GM12878 (cell line): ENCODE measurements at regions of chr17 and their contacts with region 1.

Region 1: DNA sequence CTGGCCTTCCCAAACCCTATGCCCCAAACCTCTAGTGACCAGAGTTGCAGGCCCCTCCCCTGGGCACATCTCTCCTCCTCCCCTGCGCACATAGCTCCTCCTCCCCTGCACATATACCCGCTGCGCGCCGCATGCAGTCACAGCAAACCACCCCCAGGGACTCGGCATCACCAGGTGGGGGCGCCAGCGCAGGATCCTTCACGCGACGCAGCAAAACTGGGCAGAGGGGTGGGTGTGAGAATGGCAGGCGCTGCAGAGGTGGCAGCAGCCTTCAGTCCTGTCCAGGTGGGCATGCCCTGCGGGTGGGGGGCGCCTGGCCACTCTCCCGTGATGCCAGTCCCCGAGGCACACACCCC is 5.6 kb downstream of the CORO6 start:
- DNase-seq: no peak
- ATAC-seq: peak; percentile 82
- H3K4me3 ChIP-seq: peak overlapping the region; percentile 67; the same call in 1 of the 2 replicates
- H3K27ac ChIP-seq: no peak overlapping the region; the same call in 1 of the 2 replicates
- H3K4me1 ChIP-seq: peaks cover 38% of the 10 kb centered on the region
- H3K27me3 ChIP-seq: peaks cover 4 to 6% of the 10 kb centered on the region in 2 experiments; a peak in 3 of 4 replicates
- CTCF ChIP-seq: peak; percentile 76 to 94 (median 93)
- EP300 ChIP-seq: no peak
- POLR2A ChIP-seq: peak; percentile 70
- RAD21 ChIP-seq: peak; percentile 47

Region 2: GRCh38 chr17:29514792-29515191 is 102.3 kb before region 1 on chr17:
- CTCF ChIA-PET with region 1: no interaction called
- POLR2A ChIA-PET with region 1: no interaction called
- RAD21 ChIA-PET with region 1: no interaction called
- SMC1A ChIA-PET with region 1: no interaction called
- in situ Hi-C with region 1: no loop called
- intact Hi-C with region 1: no loop called
- DNase-seq: no peak
- ATAC-seq: no peak
- H3K4me3 ChIP-seq: no peak overlapping the region
- H3K27ac ChIP-seq: no peak overlapping the region
- H3K4me1 ChIP-seq: no peaks in the 10 kb centered on the region
- H3K27me3 ChIP-seq: no peaks in the 10 kb centered on the region
- CTCF ChIP-seq: no peak
- EP300 ChIP-seq: no peak
- POLR2A ChIP-seq: no peak
- RAD21 ChIP-seq: no peak

Region 3: DNA sequence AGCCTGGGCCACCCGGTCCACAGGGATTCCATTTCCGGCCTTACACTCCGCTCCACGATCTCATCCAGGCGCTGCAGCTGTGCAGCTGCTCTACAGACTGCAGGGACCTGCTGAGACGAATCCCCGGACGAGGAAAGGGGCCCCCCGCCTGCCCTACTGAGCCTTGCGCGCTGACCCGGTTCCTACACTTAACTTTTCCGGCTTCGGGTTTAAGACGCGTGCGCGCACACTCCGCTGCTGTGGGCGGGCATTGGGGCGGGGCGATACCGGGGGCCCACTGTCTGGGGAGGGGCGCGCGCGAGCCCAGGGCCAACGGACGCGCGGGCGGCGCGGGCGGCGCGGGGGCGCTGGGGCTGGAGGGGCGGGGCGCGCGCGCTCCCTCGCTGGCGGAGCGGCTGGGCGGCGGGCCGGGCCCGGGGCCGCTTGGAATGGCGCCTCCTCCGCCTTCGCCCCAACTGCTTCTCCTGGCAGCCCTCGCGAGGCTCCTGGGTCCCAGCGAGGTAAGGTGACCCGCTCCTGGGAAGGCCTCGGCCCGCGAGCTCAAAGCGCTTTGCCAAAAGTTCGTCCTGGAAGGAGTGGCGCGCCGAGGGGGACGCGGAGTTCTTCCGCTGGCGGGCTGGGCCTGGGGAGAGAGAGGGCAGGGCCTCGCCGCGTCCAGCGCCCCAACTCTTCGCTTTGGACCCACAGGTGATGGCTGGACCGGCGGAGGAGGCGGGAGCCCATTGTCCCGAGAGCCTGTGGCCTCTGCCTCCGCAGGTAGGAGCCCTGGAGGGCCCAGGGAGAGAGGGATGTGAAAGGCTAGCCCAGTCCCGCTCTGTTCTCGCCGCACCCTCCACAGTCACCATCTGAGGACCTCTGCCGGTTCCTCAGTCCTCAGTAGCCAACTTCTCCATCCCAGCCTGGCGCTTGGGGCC is 48.5 kb before region 1 on chr17 and contains the start of gene TP53I13:
- CTCF ChIA-PET with region 1: interaction called, 16 read pairs
- POLR2A ChIA-PET with region 1: interaction called, 6 read pairs
- RAD21 ChIA-PET with region 1: interaction called, 9 read pairs
- SMC1A ChIA-PET with region 1: interaction called, 3 read pairs
- in situ Hi-C with region 1: no loop called
- intact Hi-C with region 1: no loop called
- DNase-seq: no peak
- ATAC-seq: peak; percentile 64
- H3K4me3 ChIP-seq: peak within 1 kb of the TSS; percentile 96
- H3K27ac ChIP-seq: peak within 1 kb of the TSS; percentile 81
- H3K4me1 ChIP-seq: peaks cover 6% of the 10 kb centered on the region; the same call in 1 of the 2 replicates
- H3K27me3 ChIP-seq: no peaks in the 10 kb centered on the region
- CTCF ChIP-seq: no peak
- EP300 ChIP-seq: no peak
- POLR2A ChIP-seq: peak; percentile 78
- RAD21 ChIP-seq: no peak
- polyA plus RNA-seq, gene TP53I13: 0.31 TPM in 1 of 2 experiments, not detected in the other

Region 4: GRCh38 chr17:29633886-29634285 is 16.8 kb after region 1 on chr17:
- CTCF ChIA-PET with region 1: interaction called, 33 read pairs
- POLR2A ChIA-PET with region 1: no interaction called
- RAD21 ChIA-PET with region 1: interaction called, 22 read pairs
- SMC1A ChIA-PET with region 1: interaction called, 5 read pairs
- in situ Hi-C with region 1: no loop called
- intact Hi-C with region 1: no loop called
- DNase-seq: no peak
- ATAC-seq: no peak
- H3K4me3 ChIP-seq: no peak overlapping the region
- H3K27ac ChIP-seq: no peak overlapping the region
- H3K4me1 ChIP-seq: no peaks in the 10 kb centered on the region
- H3K27me3 ChIP-seq: no peaks in the 10 kb centered on the region
- CTCF ChIP-seq: no peak
- EP300 ChIP-seq: no peak
- POLR2A ChIP-seq: no peak
- RAD21 ChIP-seq: no peak

Region 5: GRCh38 chr17:29682054-29682453 is 65.0 kb after region 1 on chr17:
- CTCF ChIA-PET with region 1: interaction called, 4 read pairs
- POLR2A ChIA-PET with region 1: interaction called, 4 read pairs
- RAD21 ChIA-PET with region 1: interaction called, 17 read pairs
- SMC1A ChIA-PET with region 1: interaction called, 5 read pairs
- in situ Hi-C with region 1: no loop called
- intact Hi-C with region 1: no loop called
- DNase-seq: no peak
- ATAC-seq: peak; percentile 91
- H3K4me3 ChIP-seq: no peak overlapping the region
- H3K27ac ChIP-seq: peak overlapping the region; percentile 53; the same call in 1 of the 2 replicates
- H3K4me1 ChIP-seq: 0 out of 2 replicates have a peak, but pooled peaks cover 4% of the 10 kb centered on the region
- H3K27me3 ChIP-seq: no peaks in the 10 kb centered on the region
- CTCF ChIP-seq: peak; percentile 5 to 22 (median 12); a peak in 1 of 6 replicates
- EP300 ChIP-seq: no peak
- POLR2A ChIP-seq: no peak
- RAD21 ChIP-seq: peak; percentile 32

Region 6: DNA sequence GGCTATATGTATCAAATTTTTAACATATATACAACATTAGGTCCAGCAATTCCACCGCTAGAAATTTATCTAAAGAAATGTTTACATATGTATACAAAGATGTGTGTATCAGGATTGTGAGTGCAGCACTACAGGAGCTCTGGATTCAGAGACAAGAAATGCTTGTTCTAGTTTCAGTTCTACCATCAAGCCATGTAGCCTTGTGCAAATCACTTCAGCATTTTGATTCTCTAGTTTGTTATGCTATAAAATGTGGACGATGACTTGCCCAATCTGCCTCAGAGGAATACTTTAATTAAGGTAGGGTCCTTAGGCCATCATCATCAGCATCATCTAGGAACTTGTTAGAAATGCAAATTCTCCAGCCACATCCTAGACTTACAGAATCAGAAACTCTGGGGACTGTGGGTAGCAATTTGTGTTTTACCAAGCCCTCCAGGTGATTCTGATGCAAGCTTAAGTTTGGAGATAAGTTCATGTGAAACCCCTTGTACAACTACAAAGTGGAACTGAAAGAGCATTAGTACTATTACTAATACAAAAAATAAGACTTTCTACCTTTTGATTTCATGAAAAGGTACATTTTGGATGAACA is 136.8 kb after region 1 on chr17:
- CTCF ChIA-PET with region 1: interaction called, 13 read pairs
- POLR2A ChIA-PET with region 1: no interaction called
- RAD21 ChIA-PET with region 1: no interaction called
- SMC1A ChIA-PET with region 1: no interaction called
- in situ Hi-C with region 1: no loop called
- intact Hi-C with region 1: no loop called
- DNase-seq: peak; percentile 61
- ATAC-seq: peak; percentile 81
- H3K4me3 ChIP-seq: no peak overlapping the region
- H3K27ac ChIP-seq: peak overlapping the region; percentile 21
- H3K4me1 ChIP-seq: peaks cover 32% of the 10 kb centered on the region
- H3K27me3 ChIP-seq: no peaks in the 10 kb centered on the region
- CTCF ChIP-seq: no peak
- EP300 ChIP-seq: no peak
- POLR2A ChIP-seq: no peak
- RAD21 ChIP-seq: no peak

Region 7: GRCh38 chr17:29807520-29808351 is 190.6 kb after region 1 on chr17:
- CTCF ChIA-PET with region 1: interaction called, 14 read pairs
- POLR2A ChIA-PET with region 1: interaction called, 3 read pairs
- RAD21 ChIA-PET with region 1: interaction called, 10 read pairs
- SMC1A ChIA-PET with region 1: interaction called, 3 read pairs
- in situ Hi-C with region 1: no loop called
- intact Hi-C with region 1: no loop called
- DNase-seq: peak; percentile 31
- ATAC-seq: peak; percentile 83
- H3K4me3 ChIP-seq: no peak overlapping the region
- H3K27ac ChIP-seq: no peak overlapping the region
- H3K4me1 ChIP-seq: peaks cover 19% of the 10 kb centered on the region
- H3K27me3 ChIP-seq: no peaks in the 10 kb centered on the region
- CTCF ChIP-seq: peak; percentile 65 to 85 (median 69)
- EP300 ChIP-seq: no peak
- POLR2A ChIP-seq: no peak
- RAD21 ChIP-seq: peak; percentile 90

Region 8: DNA sequence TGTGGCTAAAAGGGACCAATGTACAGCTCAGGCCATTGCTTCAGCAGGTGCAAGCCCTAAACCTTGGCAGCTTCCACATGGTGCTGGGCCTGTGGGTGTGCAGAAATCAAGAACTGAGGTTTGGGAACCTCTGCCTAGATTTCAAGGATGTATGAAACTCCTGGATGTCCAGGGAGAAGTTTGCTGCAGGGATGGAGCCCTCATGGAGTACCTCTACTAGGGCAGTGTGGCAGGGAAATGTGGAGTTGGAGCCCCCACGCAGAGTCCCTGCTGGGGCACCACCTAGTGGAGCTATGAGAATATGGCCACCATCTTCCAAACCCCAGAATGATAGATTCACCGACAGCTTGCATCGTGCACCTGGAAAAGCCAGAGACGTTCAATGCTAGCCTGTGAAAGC is 337.3 kb after region 1 on chr17:
- CTCF ChIA-PET with region 1: no interaction called
- POLR2A ChIA-PET with region 1: no interaction called
- RAD21 ChIA-PET with region 1: no interaction called
- SMC1A ChIA-PET with region 1: no interaction called
- in situ Hi-C with region 1: no loop called
- intact Hi-C with region 1: no loop called
- DNase-seq: no peak
- ATAC-seq: no peak
- H3K4me3 ChIP-seq: no peak overlapping the region
- H3K27ac ChIP-seq: no peak overlapping the region
- H3K4me1 ChIP-seq: no peaks in the 10 kb centered on the region
- H3K27me3 ChIP-seq: no peaks in the 10 kb centered on the region
- CTCF ChIP-seq: no peak
- EP300 ChIP-seq: no peak
- POLR2A ChIP-seq: no peak
- RAD21 ChIP-seq: no peak